ENCODE measurements at regions of chr11 and their contacts with region 1.

Region 1: DNA sequence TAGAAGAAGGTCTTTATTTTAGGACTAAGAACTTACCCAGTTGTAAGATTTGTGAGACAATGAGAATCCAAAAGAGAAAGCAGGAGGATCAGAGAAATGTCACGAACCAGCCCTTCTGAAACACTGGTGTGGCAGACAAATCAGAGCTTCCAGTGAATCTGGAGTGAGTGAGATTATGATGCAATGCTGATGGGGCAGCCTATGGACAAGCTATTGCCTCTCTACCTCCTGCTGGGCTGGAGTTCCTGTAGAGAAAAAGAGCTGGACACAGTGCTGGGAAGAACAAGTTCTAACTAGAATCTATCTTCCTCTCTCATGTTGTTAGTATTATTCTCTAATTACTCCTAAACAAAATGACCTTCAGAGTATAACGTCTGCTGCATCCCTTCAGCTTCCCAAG is 12.0 kb upstream of the ANO3 start:
- DNase-seq: no peak
- ATAC-seq: peak; percentile 54
- H3K4me3 ChIP-seq: no peak overlapping the region
- H3K27ac ChIP-seq: no peak overlapping the region
- H3K4me1 ChIP-seq: no peaks in the 10 kb centered on the region
- H3K27me3 ChIP-seq: no peaks in the 10 kb centered on the region
- CTCF ChIP-seq: no peak
- POLR2A ChIP-seq: no peak
- RAD21 ChIP-seq: no peak

Region 2: GRCh38 chr11:26675233-26675928 is 355.5 kb after region 1 on chr11:
- CTCF ChIA-PET with region 1: no interaction called
- POLR2A ChIA-PET with region 1: interaction called, 14 read pairs
- dilution Hi-C with region 1: no loop called
- in situ Hi-C with region 1: no loop called
- intact Hi-C with region 1: no loop called
- DNase-seq: no peak
- ATAC-seq: no peak
- H3K4me3 ChIP-seq: no peak overlapping the region
- H3K27ac ChIP-seq: no peak overlapping the region
- H3K4me1 ChIP-seq: no peaks in the 10 kb centered on the region
- H3K27me3 ChIP-seq: 0 out of 2 replicates have a peak, but pooled peaks cover 2% of the 10 kb centered on the region
- CTCF ChIP-seq: no peak
- POLR2A ChIP-seq: no peak
- RAD21 ChIP-seq: no peak